ENCODE measurements at regions of chrX and their contacts with region 1.

Region 1: GRCh38 chrX:19758539-19758938 is 128.9 kb downstream of the SH3KBP1 start:
- DNase-seq: peak; percentile 65
- ATAC-seq: peak; percentile 71
- H3K4me3 ChIP-seq: no peak overlapping the region
- H3K4me3 Mint-ChIP-seq: peak overlapping the region; percentile 26
- H3K27ac ChIP-seq: peak overlapping the region in 1 of 2 donors; percentile 23
- H3K27ac Mint-ChIP-seq: peak overlapping the region; percentile 68
- H3K4me1 ChIP-seq: peaks cover 11 to 32% of the 10 kb centered on the region in 2 donors
- H3K4me1 Mint-ChIP-seq: peaks cover 56% of the 10 kb centered on the region
- H3K27me3 ChIP-seq: no peaks in the 10 kb centered on the region
- H3K27me3 Mint-ChIP-seq: no peaks in the 10 kb centered on the region
- CTCF ChIP-seq: no peak

Region 2: DNA sequence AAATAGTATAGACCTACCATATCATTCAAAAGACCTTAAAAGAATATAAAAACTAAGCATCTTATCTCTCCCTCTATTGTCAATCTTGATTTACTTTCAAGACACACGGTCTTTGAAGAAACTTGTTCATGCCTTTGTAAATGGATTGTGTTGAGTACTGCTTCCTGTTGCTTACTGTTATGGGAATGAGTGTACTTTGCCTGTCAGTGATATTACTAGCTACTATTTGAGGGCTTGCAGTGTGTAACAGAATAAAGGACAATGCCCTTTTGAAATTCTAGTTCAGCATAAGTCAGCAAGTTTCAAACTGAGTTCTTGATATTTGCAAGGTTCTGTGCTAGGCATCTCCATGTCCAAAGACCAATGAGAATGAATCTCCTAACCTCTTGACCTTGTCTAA is 1297.1 kb before region 1 on chrX:
- CTCF ChIA-PET with region 1: no interaction called
- POLR2A ChIA-PET with region 1: interaction called, 11 read pairs
- intact Hi-C with region 1: no loop called
- DNase-seq: no peak
- ATAC-seq: no peak
- H3K4me3 ChIP-seq: no peak overlapping the region
- H3K4me3 Mint-ChIP-seq: no peak overlapping the region
- H3K27ac ChIP-seq: no peak overlapping the region
- H3K27ac Mint-ChIP-seq: no peak overlapping the region
- H3K4me1 ChIP-seq: peaks cover 5 to 6% of the 10 kb centered on the region in 2 donors
- H3K4me1 Mint-ChIP-seq: peaks cover 14% of the 10 kb centered on the region
- H3K27me3 ChIP-seq: no peaks in the 10 kb centered on the region
- H3K27me3 Mint-ChIP-seq: no peaks in the 10 kb centered on the region
- CTCF ChIP-seq: no peak

Region 3: GRCh38 chrX:19682712-19683331 is 75.7 kb before region 1 on chrX:
- CTCF ChIA-PET with region 1: no interaction called
- POLR2A ChIA-PET with region 1: no interaction called
- intact Hi-C with region 1: no loop called
- DNase-seq: peak; percentile 74
- ATAC-seq: peak; percentile 85
- H3K4me3 ChIP-seq: no peak overlapping the region
- H3K4me3 Mint-ChIP-seq: peak overlapping the region; percentile 62
- H3K27ac ChIP-seq: peak overlapping the region in 1 of 2 donors; percentile 62
- H3K27ac Mint-ChIP-seq: peak overlapping the region; percentile 92
- H3K4me1 ChIP-seq: peaks cover 27 to 40% of the 10 kb centered on the region in 2 donors
- H3K4me1 Mint-ChIP-seq: peaks cover 71% of the 10 kb centered on the region
- H3K27me3 ChIP-seq: no peaks in the 10 kb centered on the region
- H3K27me3 Mint-ChIP-seq: no peaks in the 10 kb centered on the region
- CTCF ChIP-seq: no peak

Region 4: GRCh38 chrX:19791562-19791961 is 33.0 kb after region 1 on chrX:
- CTCF ChIA-PET with region 1: no interaction called
- POLR2A ChIA-PET with region 1: no interaction called
- intact Hi-C with region 1: loop called (anchors 5 kb)
- DNase-seq: no peak
- ATAC-seq: no peak
- H3K4me3 ChIP-seq: no peak overlapping the region
- H3K4me3 Mint-ChIP-seq: peak overlapping the region; percentile 29
- H3K27ac ChIP-seq: no peak overlapping the region
- H3K27ac Mint-ChIP-seq: peak overlapping the region; percentile 26
- H3K4me1 ChIP-seq: peaks cover 11 to 22% of the 10 kb centered on the region in 2 donors
- H3K4me1 Mint-ChIP-seq: peaks cover 46% of the 10 kb centered on the region
- H3K27me3 ChIP-seq: no peaks in the 10 kb centered on the region
- H3K27me3 Mint-ChIP-seq: no peaks in the 10 kb centered on the region
- CTCF ChIP-seq: no peak

Region 5: GRCh38 chrX:19805046-19805690 is 46.6 kb after region 1 on chrX:
- CTCF ChIA-PET with region 1: no interaction called
- POLR2A ChIA-PET with region 1: no interaction called
- intact Hi-C with region 1: loop called (anchors 5 kb)
- DNase-seq: peak; percentile 25
- ATAC-seq: peak; percentile 36
- H3K4me3 ChIP-seq: no peak overlapping the region
- H3K4me3 Mint-ChIP-seq: peak overlapping the region; percentile 40
- H3K27ac ChIP-seq: peak overlapping the region in 1 of 2 donors; percentile 24
- H3K27ac Mint-ChIP-seq: peak overlapping the region; percentile 50
- H3K4me1 ChIP-seq: peaks cover 26 to 32% of the 10 kb centered on the region in 2 donors
- H3K4me1 Mint-ChIP-seq: peaks cover 55% of the 10 kb centered on the region
- H3K27me3 ChIP-seq: no peaks in the 10 kb centered on the region
- H3K27me3 Mint-ChIP-seq: no peaks in the 10 kb centered on the region
- CTCF ChIP-seq: no peak